ENCODE measurements at regions of chr4 and their contacts with region 1.

Region 1: DNA sequence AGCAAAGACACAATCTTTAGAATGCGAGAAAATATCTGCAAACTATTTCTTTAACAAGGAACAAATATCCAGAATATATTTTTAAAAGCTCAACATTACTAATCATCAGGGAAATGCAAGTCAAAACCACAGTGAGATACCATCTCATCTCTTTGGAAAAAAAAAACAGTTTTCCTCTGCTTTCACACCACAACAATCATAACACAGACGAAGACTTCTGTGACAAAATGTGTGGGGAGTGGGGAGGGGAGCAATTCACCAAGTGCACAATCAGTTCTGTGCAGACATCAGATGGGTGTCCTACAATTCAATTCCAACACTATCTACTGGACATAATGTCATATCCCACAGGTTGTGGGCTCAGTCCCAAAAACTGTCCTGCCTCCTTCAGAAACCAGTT is 293.2 kb upstream of the SLC7A11 start:
- DNase-seq: no peak
- H3K4me3 ChIP-seq: no peak overlapping the region
- H3K27ac ChIP-seq: no peak overlapping the region
- H3K4me1 ChIP-seq: no peaks in the 10 kb centered on the region
- H3K27me3 ChIP-seq: no peaks in the 10 kb centered on the region
- CTCF ChIP-seq: no peak
- EP300 ChIP-seq: no peak
- POLR2A ChIP-seq: no peak

Region 2: DNA sequence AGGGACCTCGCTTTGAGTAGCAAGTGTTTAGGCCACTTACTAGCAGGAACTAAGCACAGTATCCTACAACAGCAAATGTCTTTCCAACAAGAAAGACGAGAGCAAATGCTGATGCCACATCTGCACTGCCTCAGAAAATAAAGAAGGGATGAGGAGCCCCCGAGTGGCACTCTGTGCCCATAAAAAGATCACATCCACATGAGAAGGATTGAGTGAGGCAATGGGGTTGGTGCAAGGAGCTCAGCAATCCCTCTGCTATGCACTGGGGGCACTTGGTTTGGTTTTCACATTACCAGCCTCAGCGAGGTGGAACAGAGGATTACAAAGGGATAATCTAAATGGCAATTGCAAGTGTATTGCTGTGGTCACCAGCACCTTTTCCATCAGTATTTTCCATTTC is 40.4 kb before region 1 on chr4:
- in situ Hi-C with region 1: no loop called
- intact Hi-C with region 1: loop called (anchors 1 kb)
- DNase-seq: no peak
- H3K4me3 ChIP-seq: no peak overlapping the region
- H3K27ac ChIP-seq: no peak overlapping the region
- H3K4me1 ChIP-seq: no peaks in the 10 kb centered on the region
- H3K27me3 ChIP-seq: no peaks in the 10 kb centered on the region
- CTCF ChIP-seq: no peak
- EP300 ChIP-seq: no peak
- POLR2A ChIP-seq: no peak

Region 3: DNA sequence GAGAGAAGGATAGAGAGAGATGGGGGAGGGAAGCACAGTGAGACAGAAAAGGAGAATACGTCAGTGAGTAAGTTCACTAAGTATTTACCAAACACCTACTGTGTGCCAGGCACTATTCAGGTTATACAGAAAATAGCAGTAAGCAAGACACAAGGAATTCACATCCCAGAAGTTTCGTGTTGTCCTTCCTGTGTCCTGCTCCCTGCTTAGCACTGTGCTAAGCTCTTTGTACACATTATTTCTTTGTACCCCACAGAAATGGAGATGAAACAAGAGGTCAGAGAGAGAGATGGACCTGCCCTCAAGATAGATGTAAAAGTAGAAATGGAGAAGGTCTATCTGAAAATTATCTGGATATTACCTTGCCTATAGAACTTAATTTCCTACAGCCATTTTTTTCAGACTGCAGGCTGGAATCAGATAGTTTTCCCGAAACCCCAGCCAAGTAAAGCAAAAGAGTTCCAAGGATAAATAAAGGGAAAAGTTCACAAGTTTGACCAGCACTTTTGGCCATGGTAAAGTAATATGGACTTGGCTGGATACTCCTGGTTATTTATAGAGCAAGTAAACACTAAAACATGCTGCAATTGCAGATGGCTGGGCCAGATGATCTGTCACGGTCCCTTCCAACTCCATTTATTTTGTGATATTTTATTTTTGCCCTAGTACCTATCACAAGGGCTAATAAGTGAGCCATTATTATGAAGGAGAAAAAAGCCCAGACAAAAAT is 60.6 kb after region 1 on chr4:
- in situ Hi-C with region 1: no loop called
- intact Hi-C with region 1: no loop called
- DNase-seq: no peak
- H3K4me3 ChIP-seq: no peak overlapping the region
- H3K27ac ChIP-seq: no peak overlapping the region
- H3K4me1 ChIP-seq: peaks cover 0 to 8% (median 0%) of the 10 kb centered on the region in 4 donors
- H3K27me3 ChIP-seq: no peaks in the 10 kb centered on the region
- CTCF ChIP-seq: no peak
- EP300 ChIP-seq: no peak
- POLR2A ChIP-seq: no peak

Region 4: GRCh38 chr4:139202991-139203390 is 667.7 kb after region 1 on chr4:
- in situ Hi-C with region 1: no loop called
- intact Hi-C with region 1: loop called (anchors 5 kb)
- DNase-seq: no peak
- H3K4me3 ChIP-seq: no peak overlapping the region
- H3K27ac ChIP-seq: no peak overlapping the region
- H3K4me1 ChIP-seq: no peaks in the 10 kb centered on the region
- H3K27me3 ChIP-seq: no peaks in the 10 kb centered on the region
- CTCF ChIP-seq: no peak
- EP300 ChIP-seq: no peak
- POLR2A ChIP-seq: no peak